Left cardiac atrium (tissue), 4 donors: ENCODE measurements at regions of chr1 and their contacts with region 1.

Region 1: DNA sequence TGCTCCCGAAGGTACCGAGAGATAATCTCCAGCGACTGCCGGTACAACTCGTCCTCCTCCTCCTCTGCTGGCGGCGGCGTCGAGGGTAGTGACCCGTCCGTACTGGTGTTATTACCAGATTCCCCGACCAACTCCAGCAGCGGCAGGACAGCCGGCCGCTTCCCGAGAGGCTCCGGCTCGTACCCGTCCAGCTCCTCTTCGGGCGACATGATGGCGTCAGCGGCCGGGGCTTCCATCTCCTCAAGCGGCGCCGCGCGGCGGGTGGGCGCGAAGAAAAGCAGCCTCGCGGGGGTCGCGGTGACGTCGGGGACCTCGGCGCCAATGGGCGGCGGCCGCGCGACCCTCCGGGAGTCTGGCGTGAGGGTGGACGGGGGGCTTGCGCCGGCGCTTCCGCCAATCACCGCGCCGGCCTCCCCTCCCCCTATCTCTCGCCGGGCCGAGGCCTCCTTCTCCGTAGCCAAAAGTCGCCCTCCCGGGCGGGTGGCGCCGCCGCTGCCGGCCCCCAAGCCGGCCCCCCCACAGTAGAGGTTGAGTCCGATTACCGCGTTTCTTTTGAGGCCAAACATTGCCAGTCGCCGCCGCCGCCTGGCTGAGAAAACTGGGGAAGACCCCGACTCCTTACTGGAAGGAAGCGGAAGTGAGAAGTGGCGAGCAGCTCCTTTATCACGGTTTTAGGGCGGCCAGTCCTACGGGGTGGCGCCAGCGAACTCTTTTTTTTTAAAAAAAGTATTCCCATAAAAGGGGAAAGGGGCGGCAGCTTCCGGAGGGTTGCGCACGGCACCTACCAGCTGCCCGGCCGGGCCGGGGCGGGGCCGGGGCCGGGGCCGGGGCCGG is at the start of gene MCL1:
- DNase-seq: peak; percentile 95
- ATAC-seq: peak; percentile 94
- total RNA-seq, gene MCL1: 103 to 146 TPM

Region 2: DNA sequence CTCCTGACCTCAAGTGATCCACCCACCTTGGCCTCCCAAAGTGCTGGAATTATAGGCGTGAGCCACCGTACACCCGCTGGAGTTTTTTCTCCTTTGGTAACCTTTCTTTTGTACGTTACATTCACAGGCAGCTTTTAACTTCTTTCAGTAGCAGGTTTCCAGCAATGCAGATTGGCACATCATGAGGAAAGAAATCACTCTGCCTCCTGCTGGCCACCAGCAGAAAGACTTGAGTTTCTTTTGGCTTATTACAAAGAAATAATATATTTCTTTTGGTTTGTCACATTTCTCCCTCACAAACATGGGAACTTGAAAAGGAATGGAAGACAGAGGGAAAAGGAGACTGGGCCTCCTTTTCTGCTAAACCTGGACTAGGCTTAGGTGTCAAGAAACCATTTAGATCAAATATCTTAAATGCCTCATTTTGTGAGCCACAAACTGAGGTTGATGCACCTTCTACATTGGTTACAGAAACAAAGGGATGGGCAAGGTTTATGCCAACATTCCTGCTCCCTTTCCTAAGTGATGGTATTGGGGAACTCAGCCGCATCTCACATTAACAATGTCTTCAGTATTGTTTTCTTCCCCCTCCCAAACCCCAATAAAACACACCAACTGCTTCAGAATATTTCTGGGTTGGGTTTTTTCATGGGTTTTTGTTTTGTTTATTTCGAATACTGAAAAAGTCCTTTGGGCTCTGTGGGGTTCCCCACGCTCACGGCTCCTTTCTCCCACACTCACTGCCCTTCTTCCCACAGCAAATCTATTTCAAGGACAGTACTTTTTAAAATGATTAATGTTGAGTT is 42.5 kb after region 1 on chr1:
- intact Hi-C with region 1: loop called in 1 of 2 experiments (anchors 5 kb)
- DNase-seq: peak; percentile 53
- ATAC-seq: peak in 1 of 2 donors; percentile 7